ENCODE measurements at regions of chr6 and their contacts with region 1.

Region 1: DNA sequence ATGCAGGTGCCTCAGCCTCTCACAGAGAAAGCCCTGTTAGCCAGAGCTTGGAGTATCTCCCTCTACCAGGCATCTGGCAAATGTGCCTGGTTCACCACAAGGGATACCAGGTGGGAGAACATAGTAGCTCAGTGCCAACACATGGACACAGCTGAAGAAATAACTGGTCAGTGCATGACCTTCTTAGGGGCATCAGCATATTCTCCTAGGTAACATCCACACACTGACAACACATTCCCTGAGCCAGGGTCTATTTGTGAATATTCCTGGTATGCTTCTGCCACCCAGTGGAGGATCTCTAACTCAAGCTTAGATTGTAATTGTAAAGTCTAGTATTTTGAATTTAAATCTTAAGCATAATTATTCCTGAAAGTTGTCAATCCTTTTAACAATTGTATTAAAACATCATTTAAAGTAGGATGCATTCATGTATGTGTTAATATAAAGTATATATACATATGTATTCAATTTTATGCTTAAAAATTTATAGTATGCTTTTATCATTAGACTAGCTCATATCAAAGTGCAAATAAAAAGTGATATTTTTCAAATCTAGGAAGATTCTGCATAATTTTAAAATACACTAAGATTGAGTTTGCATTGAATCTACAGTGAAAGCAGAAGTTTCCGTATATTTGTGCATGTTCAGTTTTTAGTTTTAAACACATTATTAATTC is 45.3 kb upstream of the COL21A1 start:
- DNase-seq: peak; percentile 15
- CTCF ChIP-seq: peak; percentile 16

Region 2: DNA sequence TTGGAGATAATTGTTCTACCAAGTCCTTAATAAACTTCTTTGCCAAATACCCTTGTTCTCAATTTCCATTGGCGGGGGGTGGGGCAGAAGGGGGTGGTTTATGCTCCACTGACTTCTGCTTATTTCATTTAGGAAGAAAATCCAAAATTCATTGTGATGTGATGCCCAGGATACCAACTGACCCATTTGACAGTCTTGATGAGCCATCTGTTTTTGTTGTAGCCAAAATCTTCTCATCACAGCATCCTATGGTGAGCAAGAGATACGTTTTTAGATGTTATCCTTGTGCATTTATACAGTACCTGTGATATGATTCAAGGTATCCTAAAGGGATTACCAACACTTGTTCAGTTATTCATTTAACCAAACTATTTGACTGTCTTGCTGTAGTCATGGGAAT is 308.8 kb before region 1 on chr6:
- CTCF ChIA-PET with region 1: interaction called, 12 read pairs
- POLR2A ChIA-PET with region 1: no interaction called
- DNase-seq: no peak
- CTCF ChIP-seq: no peak

Region 3: DNA sequence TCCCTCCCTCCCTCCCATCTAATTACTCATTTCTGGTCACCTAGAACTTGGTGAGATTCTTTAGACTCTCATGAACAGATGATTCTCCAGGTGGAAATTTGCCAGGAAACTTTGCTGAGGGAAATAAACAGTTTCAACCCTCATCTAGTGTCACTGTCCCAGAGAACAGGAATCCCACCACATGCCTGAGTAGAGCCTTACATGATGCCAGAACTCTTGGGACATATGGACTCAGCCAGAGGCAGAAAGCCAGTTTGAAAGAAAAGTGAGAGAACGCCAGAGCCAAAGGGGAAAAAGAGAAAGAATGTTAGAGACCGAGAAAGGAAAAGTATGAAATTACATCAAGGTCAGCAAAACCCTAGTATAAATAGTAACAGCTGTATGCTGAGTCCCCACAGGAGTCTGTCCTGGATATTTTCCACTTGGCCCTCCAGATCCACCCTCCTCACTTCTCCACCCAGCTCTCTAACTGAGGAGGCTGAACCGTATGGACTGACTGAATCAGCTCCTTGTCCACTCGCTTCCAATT is 82.3 kb after region 1 on chr6:
- CTCF ChIA-PET with region 1: no interaction called
- POLR2A ChIA-PET with region 1: no interaction called
- DNase-seq: no peak
- CTCF ChIP-seq: no peak

Region 4: DNA sequence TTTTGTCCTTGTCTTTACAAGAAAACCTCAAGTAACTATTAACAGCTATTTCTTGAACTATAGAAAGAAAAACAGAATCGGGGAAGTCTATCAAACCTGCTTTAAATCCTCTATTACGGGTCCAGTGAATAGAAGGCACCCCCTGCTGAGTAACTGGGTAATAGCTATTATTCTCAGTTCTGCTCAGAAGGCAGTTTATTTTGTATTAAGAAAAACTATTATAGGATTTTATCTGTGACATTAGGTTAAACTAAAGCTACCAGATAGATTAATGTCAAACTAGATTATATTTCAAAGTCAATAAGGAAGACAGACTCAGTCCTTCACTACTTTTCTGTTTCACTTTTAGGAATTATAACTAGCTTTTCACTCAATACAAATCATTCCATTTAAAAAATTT is 256.4 kb after region 1 on chr6:
- CTCF ChIA-PET with region 1: no interaction called
- POLR2A ChIA-PET with region 1: no interaction called
- DNase-seq: no peak
- CTCF ChIP-seq: peak; percentile 28

Measured in GM10248 (cell line).